ENCODE measurements at regions of chr1 and their contacts with region 1.

Region 1: GRCh38 chr1:6401673-6402072 is 8.1 kb upstream of the ACOT7 start:
- DNase-seq: peak in 1 of 5 donors; percentile 7
- ATAC-seq: no peak
- H3K4me3 ChIP-seq: no peak overlapping the region
- H3K27ac ChIP-seq: no peak overlapping the region
- H3K4me1 ChIP-seq: no peaks in the 10 kb centered on the region
- H3K27me3 ChIP-seq: peaks cover 0 to 16% (median 0%) of the 10 kb centered on the region in 9 donors
- CTCF ChIP-seq: no peak
- POLR2A ChIP-seq: no peak

Region 2: GRCh38 chr1:6260961-6261614 is 140.6 kb before region 1 on chr1 and contains the start of gene GPR153:
- intact Hi-C with region 1: no loop called
- DNase-seq: peak in 4 of 5 donors; percentile 58 to 71 (median 64)
- ATAC-seq: peak in 3 of 4 donors; percentile 36 to 69 (median 56)
- H3K4me3 ChIP-seq: peak within 1 kb of the TSS; percentile 43 to 84 (median 65)
- H3K27ac ChIP-seq: peak within 1 kb of the TSS; percentile 8 to 85 (median 69)
- H3K4me1 ChIP-seq: peaks cover 0 to 38% (median 25%) of the 10 kb centered on the region in 12 donors
- H3K27me3 ChIP-seq: peaks cover 0 to 26% (median 8%) of the 10 kb centered on the region in 9 donors
- CTCF ChIP-seq: no peak
- POLR2A ChIP-seq: no peak
- total RNA-seq, gene GPR153: 2.7 to 30.0 (median 4.8) TPM

Region 3: DNA sequence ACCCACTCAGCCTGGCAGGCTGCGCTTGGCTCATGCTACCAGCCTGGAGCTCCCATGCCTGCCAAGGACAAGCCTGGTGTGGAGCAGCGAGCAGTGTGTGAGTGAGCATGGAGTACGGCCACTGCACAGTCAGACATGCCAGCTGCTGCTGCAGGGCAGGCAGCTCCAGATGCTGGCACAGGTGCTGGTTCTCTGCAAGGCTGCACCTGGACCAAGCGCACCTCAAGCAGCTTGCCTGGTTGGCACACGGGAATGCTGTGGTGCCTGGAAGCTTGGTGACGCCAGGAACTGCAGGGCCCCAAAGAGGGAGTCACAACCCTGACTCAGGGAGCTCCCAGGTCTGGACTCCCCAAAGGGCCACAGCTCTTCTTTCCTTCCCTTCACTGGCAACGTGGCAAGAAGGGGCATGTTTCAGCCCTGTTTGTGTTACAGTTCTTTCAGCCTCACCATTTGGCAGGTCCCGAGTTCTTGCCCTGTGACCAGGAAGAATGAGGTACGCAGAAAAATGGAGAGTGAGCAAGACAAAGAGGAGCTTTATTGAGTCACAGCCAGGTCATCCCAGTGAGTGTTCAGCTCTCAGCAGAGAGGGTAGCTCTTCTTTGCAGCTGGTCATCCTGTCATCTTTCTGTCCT is 34.2 kb before region 1 on chr1:
- intact Hi-C with region 1: loop called in 9 of 10 experiments (anchors 1 to 5 kb)
- DNase-seq: peak in 3 of 5 donors; percentile 49 to 83 (median 66)
- ATAC-seq: peak; percentile 79 to 95 (median 93)
- H3K4me3 ChIP-seq: no peak overlapping the region
- H3K27ac ChIP-seq: peak overlapping the region in 1 of 12 donors; percentile 24
- H3K4me1 ChIP-seq: peaks cover 0 to 13% (median 5%) of the 10 kb centered on the region in 12 donors
- H3K27me3 ChIP-seq: no peaks in the 10 kb centered on the region
- CTCF ChIP-seq: no peak
- POLR2A ChIP-seq: no peak

Region 4: GRCh38 chr1:6547301-6547700 is 145.6 kb after region 1 on chr1:
- intact Hi-C with region 1: no loop called
- DNase-seq: peak in 1 of 5 donors; percentile 3
- ATAC-seq: no peak
- H3K4me3 ChIP-seq: no peak overlapping the region
- H3K27ac ChIP-seq: peak overlapping the region in 6 of 12 donors; percentile 33 to 77 (median 57)
- H3K4me1 ChIP-seq: peaks cover 0 to 24% (median 6%) of the 10 kb centered on the region in 12 donors
- H3K27me3 ChIP-seq: no peaks in the 10 kb centered on the region
- CTCF ChIP-seq: peak in 1 of 12 donors; percentile 6
- POLR2A ChIP-seq: no peak